Endothelial cell of umbilical vein (primary cell): ENCODE measurements at regions of chr3 and their contacts with region 1.

Region 1: GRCh38 chr3:12782172-12782815 is 14.2 kb upstream of the CAND2 start:
- DNase-seq: no peak
- H3K4me3 ChIP-seq: no peak overlapping the region
- H3K27ac ChIP-seq: no peak overlapping the region
- H3K4me1 ChIP-seq: no peaks in the 10 kb centered on the region
- H3K27me3 ChIP-seq: peaks cover 3 to 8% of the 10 kb centered on the region in 2 experiments
- CTCF ChIP-seq: no peak
- POLR2A ChIP-seq: no peak

Region 2: GRCh38 chr3:12796171-12797123 is 14.2 kb after region 1 on chr3 and contains the start of gene CAND2:
- CTCF ChIA-PET with region 1: interaction called, 17 read pairs
- POLR2A ChIA-PET with region 1: no interaction called
- dilution Hi-C with region 1: no loop called
- intact Hi-C with region 1: no loop called
- DNase-seq: peak; percentile 51
- H3K4me3 ChIP-seq: peak within 1 kb of the TSS; percentile 51 to 66 (median 65)
- H3K27ac ChIP-seq: no peak within 1 kb of the TSS
- H3K4me1 ChIP-seq: peaks cover 5% of the 10 kb centered on the region
- H3K27me3 ChIP-seq: no peaks in the 10 kb centered on the region
- CTCF ChIP-seq: no peak
- POLR2A ChIP-seq: no peak
- total RNA-seq, gene CAND2: 11.0 and 12.4 TPM in 2 replicates

Region 3: DNA sequence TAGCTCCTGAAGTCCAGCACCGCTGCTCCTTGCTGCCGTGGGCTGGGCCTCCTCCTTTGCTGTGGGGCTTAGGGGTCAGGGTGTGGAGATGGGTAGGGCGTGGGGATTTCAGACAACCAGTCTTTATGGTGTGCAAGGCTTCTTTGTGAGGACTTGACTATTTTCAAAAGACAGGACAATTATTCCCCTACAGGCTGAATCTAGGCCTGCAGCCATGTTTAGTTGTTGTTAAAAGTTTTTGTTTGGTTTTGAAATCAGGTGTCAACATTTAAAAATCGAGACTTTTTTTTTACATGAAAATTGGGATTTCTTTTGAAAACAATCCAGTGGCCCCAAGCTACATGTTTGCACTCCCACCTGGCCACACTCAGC is 48.5 kb after region 1 on chr3:
- CTCF ChIA-PET with region 1: interaction called, 6 read pairs
- POLR2A ChIA-PET with region 1: no interaction called
- dilution Hi-C with region 1: no loop called
- intact Hi-C with region 1: loop called (anchors 2 kb)
- DNase-seq: no peak
- H3K4me3 ChIP-seq: no peak overlapping the region
- H3K27ac ChIP-seq: no peak overlapping the region
- H3K4me1 ChIP-seq: peaks cover 7% of the 10 kb centered on the region
- H3K27me3 ChIP-seq: no peaks in the 10 kb centered on the region
- CTCF ChIP-seq: peak in 1 of 2 donors; percentile 9
- POLR2A ChIP-seq: no peak

Region 4: GRCh38 chr3:12841149-12841970 is 59.1 kb after region 1 on chr3 and contains the start of gene RPL32:
- CTCF ChIA-PET with region 1: interaction called, 19 read pairs
- POLR2A ChIA-PET with region 1: no interaction called
- dilution Hi-C with region 1: no loop called
- intact Hi-C with region 1: loop called (anchors 1 kb)
- DNase-seq: peak; percentile 97
- H3K4me3 ChIP-seq: peak within 1 kb of the TSS; percentile 88 to 98 (median 91)
- H3K27ac ChIP-seq: peak within 1 kb of the TSS; percentile 95
- H3K4me1 ChIP-seq: peaks cover 26% of the 10 kb centered on the region
- H3K27me3 ChIP-seq: no peaks in the 10 kb centered on the region
- CTCF ChIP-seq: peak; percentile 74 to 87
- POLR2A ChIP-seq: peak; percentile 98
- total RNA-seq, gene RPL32: 1,569 and 1,588 TPM in 2 replicates

Region 5: DNA sequence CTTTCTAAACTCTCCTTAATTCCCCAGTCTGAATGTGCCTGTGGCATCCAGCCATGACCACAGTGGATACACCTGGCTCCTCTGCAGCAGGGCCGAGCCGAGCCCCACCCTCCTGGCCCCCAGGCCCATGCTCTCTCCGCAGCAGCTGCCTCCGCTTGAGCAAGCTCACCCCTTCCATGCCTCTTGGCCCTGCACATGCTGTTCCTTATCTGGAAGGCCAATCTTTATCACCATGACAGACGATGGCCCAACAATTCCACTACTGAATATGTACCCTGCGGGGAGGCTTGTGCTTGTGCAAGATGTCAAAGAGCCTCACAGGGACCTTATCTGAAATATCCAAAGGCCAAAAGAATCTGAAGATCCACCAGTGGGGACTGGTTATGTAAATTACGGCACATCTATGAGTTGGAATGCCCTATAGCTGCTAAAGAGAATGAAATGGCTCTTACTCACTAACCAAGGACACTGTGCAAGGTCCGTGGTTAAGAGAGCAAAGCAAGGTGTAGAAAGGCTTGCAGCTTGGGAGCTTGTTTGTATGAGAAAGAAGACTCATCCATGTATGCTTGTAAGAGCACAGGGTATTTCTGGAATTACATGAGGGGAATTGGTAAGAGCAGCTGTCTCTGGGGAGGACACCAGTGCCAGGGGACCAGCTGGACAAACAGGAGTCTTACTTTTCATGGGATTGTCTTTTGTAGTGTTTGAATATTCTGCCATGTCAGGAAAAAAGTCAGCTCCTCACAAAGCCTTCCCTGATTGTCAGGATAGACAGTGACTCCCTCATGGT is 1042.4 kb after region 1 on chr3:
- CTCF ChIA-PET with region 1: no interaction called
- POLR2A ChIA-PET with region 1: no interaction called
- dilution Hi-C with region 1: no loop called
- intact Hi-C with region 1: no loop called
- DNase-seq: no peak
- H3K4me3 ChIP-seq: no peak overlapping the region
- H3K27ac ChIP-seq: no peak overlapping the region
- H3K4me1 ChIP-seq: no peaks in the 10 kb centered on the region
- H3K27me3 ChIP-seq: no peaks in the 10 kb centered on the region
- CTCF ChIP-seq: no peak
- POLR2A ChIP-seq: no peak